Endothelial cell of umbilical vein (primary cell): ENCODE measurements at regions of chr15 and their contacts with region 1.

Region 1: GRCh38 chr15:85618956-85619491 is 175.7 kb downstream of the KLHL25 start:
- DNase-seq: peak; percentile 96
- H3K4me3 ChIP-seq: peak overlapping the region; percentile 26 to 80 (median 45)
- H3K27ac ChIP-seq: peak overlapping the region; percentile 78
- H3K4me1 ChIP-seq: peaks cover 47% of the 10 kb centered on the region
- H3K27me3 ChIP-seq: no peaks in the 10 kb centered on the region
- CTCF ChIP-seq: no peak
- POLR2A ChIP-seq: no peak

Region 2: GRCh38 chr15:85296615-85297402 is 322.2 kb before region 1 on chr15:
- CTCF ChIA-PET with region 1: no interaction called
- POLR2A ChIA-PET with region 1: no interaction called
- dilution Hi-C with region 1: no loop called
- intact Hi-C with region 1: no loop called
- DNase-seq: peak; percentile 85
- H3K4me3 ChIP-seq: no peak overlapping the region
- H3K27ac ChIP-seq: no peak overlapping the region
- H3K4me1 ChIP-seq: peaks cover 7% of the 10 kb centered on the region
- H3K27me3 ChIP-seq: peaks cover 0 to 2% of the 10 kb centered on the region in 2 experiments
- CTCF ChIP-seq: peak; percentile 62 to 71
- POLR2A ChIP-seq: no peak

Region 3: GRCh38 chr15:85592148-85592547 is 26.9 kb before region 1 on chr15:
- CTCF ChIA-PET with region 1: interaction called, 5 read pairs
- POLR2A ChIA-PET with region 1: no interaction called
- dilution Hi-C with region 1: no loop called
- intact Hi-C with region 1: loop called (anchors 2 kb)
- DNase-seq: peak; percentile 93
- H3K4me3 ChIP-seq: no peak overlapping the region
- H3K27ac ChIP-seq: peak overlapping the region; percentile 60
- H3K4me1 ChIP-seq: peaks cover 11% of the 10 kb centered on the region
- H3K27me3 ChIP-seq: no peaks in the 10 kb centered on the region
- CTCF ChIP-seq: peak in 1 of 2 donors; percentile 23
- POLR2A ChIP-seq: no peak

Region 4: DNA sequence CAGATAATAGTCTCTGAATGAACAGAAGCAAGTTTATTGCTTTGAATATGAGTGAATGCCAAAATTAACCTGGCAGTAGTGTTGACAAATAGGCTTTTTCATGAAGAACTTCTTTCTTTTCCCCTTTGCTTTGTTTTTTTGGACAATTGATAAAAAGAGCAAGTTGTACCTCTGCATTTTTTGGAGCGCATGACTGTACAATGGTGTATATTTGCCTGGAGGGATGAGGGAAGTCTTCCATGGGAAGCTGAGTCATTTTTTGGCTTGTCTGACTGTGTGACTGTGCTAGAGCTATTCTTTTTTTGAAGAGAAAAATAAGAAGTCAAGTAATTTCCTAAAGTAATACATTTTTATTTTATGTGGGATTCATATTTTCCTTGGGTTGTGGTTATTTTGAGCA is 11.2 kb before region 1 on chr15:
- CTCF ChIA-PET with region 1: interaction called, 15 read pairs
- POLR2A ChIA-PET with region 1: interaction called, 3 read pairs
- dilution Hi-C with region 1: no loop called
- intact Hi-C with region 1: loop called (anchors 1 kb)
- DNase-seq: peak; percentile 92
- H3K4me3 ChIP-seq: peak overlapping the region in 2 of 3 experiments; percentile 28 to 55
- H3K27ac ChIP-seq: peak overlapping the region; percentile 98
- H3K4me1 ChIP-seq: peaks cover 28% of the 10 kb centered on the region
- H3K27me3 ChIP-seq: no peaks in the 10 kb centered on the region
- CTCF ChIP-seq: no peak
- POLR2A ChIP-seq: no peak

Region 5: DNA sequence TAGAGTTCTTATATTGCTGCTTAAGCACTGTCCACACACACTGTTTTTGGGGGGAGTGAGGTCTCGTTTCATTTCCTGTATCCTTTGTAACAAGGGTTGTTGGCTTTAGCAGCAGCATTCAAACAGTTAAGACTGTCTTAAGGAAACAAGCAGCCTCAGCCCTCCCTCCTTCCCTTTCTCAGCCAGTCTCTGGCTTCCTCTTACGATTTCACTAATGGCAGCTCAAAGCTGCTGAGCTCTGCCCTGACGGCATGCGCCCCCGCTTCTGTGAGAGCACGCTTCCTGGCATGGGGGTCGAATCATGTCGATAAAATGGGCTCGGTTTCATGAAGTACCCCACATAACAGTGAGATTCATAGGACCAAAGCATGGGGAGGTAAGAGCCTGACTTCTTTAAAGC is 70.7 kb after region 1 on chr15:
- CTCF ChIA-PET with region 1: no interaction called
- POLR2A ChIA-PET with region 1: no interaction called
- dilution Hi-C with region 1: no loop called
- intact Hi-C with region 1: loop called (anchors 5 kb)
- DNase-seq: peak; percentile 85
- H3K4me3 ChIP-seq: peak overlapping the region in 2 of 3 experiments; percentile 17 to 53
- H3K27ac ChIP-seq: peak overlapping the region; percentile 82
- H3K4me1 ChIP-seq: peaks cover 32% of the 10 kb centered on the region
- H3K27me3 ChIP-seq: no peaks in the 10 kb centered on the region
- CTCF ChIP-seq: no peak
- POLR2A ChIP-seq: no peak

Region 6: GRCh38 chr15:85707519-85708338 is 88.7 kb after region 1 on chr15:
- CTCF ChIA-PET with region 1: interaction called, 8 read pairs
- POLR2A ChIA-PET with region 1: no interaction called
- dilution Hi-C with region 1: no loop called
- intact Hi-C with region 1: loop called (anchors 1 kb)
- DNase-seq: peak; percentile 88
- H3K4me3 ChIP-seq: peak overlapping the region in 2 of 3 experiments; percentile 5 to 51
- H3K27ac ChIP-seq: peak overlapping the region; percentile 92
- H3K4me1 ChIP-seq: peaks cover 18% of the 10 kb centered on the region
- H3K27me3 ChIP-seq: no peaks in the 10 kb centered on the region
- CTCF ChIP-seq: no peak
- POLR2A ChIP-seq: no peak

Region 7: DNA sequence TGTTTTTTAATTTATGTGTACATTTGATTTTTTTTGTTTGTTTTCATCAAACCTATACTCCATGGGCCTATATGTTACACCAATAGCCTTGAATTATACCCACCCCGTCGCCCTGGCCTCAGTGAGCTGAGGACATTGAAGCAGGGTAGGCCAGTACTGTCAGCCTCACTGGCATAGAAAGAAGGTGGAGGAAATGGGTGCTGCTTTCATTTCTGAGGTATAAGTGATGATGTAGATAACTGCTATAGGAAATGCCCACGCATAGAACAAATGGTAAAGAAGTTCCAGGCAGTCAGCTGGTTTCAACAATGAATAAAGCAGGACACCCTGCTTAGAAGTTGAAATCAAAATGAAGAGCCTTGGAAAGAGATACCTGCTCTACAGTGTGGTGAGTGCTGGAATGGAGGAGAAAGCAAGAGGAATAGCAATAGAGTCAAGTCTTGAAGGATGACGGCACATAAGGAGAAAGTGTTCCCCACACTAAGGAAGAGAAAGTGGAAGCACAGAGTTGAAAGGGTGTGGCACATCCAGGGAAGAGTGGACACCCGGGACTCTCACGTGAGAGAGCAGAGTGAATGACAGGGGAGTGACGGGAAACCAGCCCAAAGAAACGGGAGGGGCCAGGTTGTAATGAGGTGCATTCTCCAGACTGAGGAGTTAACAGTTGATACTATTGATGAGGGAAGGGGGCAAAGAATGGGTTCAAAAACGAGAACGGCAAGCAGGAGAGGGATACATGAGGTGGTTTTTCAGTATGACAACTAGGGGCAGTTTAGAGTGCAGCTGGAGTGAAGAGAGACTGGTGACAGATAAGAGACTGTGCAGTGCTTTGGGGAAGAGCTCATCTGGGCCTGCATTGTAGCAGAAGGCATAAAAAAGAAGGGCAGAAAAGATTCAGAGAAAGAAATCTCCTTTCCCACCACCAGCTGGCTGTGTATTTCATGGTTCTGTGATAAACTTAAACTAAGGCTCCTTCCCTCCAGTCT is 105.2 kb after region 1 on chr15:
- CTCF ChIA-PET with region 1: no interaction called
- POLR2A ChIA-PET with region 1: no interaction called
- dilution Hi-C with region 1: no loop called
- intact Hi-C with region 1: loop called (anchors 5 kb)
- DNase-seq: no peak
- H3K4me3 ChIP-seq: no peak overlapping the region
- H3K27ac ChIP-seq: no peak overlapping the region
- H3K4me1 ChIP-seq: no peaks in the 10 kb centered on the region
- H3K27me3 ChIP-seq: no peaks in the 10 kb centered on the region
- CTCF ChIP-seq: no peak
- POLR2A ChIP-seq: no peak

Region 8: GRCh38 chr15:85742186-85742821 is 123.3 kb after region 1 on chr15:
- CTCF ChIA-PET with region 1: no interaction called
- POLR2A ChIA-PET with region 1: no interaction called
- dilution Hi-C with region 1: no loop called
- intact Hi-C with region 1: no loop called
- DNase-seq: no peak
- H3K4me3 ChIP-seq: no peak overlapping the region
- H3K27ac ChIP-seq: no peak overlapping the region
- H3K4me1 ChIP-seq: no peaks in the 10 kb centered on the region
- H3K27me3 ChIP-seq: no peaks in the 10 kb centered on the region
- CTCF ChIP-seq: no peak
- POLR2A ChIP-seq: no peak

Region 9: GRCh38 chr15:85840065-85840801 is 221.2 kb after region 1 on chr15:
- CTCF ChIA-PET with region 1: no interaction called
- POLR2A ChIA-PET with region 1: no interaction called
- dilution Hi-C with region 1: no loop called
- intact Hi-C with region 1: loop called (anchors 5 kb)
- DNase-seq: peak; percentile 75
- H3K4me3 ChIP-seq: peak overlapping the region in 2 of 3 experiments; percentile 3 to 9
- H3K27ac ChIP-seq: no peak overlapping the region
- H3K4me1 ChIP-seq: peaks cover 2% of the 10 kb centered on the region
- H3K27me3 ChIP-seq: peaks cover 0 to 4% of the 10 kb centered on the region in 2 experiments
- CTCF ChIP-seq: peak; percentile 94 to 98
- POLR2A ChIP-seq: no peak

Region 10: DNA sequence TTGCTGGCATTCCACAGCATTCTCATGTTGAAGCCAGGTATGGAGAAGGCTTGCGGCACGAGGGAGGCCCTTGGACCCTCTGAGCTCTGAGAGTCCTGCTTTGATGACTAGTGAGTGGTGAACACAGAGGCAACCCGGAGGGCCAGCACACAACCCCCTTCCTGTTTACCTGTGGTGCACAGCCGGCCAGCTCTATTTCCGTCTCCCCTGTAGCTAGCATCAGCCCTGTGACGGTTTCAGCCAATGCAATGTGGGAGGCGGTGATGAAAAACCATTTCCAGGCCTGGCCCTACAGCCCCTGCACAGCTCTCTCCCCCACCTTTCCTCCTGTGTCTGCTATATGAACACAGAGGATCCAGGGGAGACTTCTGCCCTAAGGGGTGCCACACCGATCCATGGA is 252.5 kb after region 1 on chr15:
- CTCF ChIA-PET with region 1: no interaction called
- POLR2A ChIA-PET with region 1: no interaction called
- dilution Hi-C with region 1: no loop called
- intact Hi-C with region 1: no loop called
- DNase-seq: no peak
- H3K4me3 ChIP-seq: no peak overlapping the region
- H3K27ac ChIP-seq: no peak overlapping the region
- H3K4me1 ChIP-seq: no peaks in the 10 kb centered on the region
- H3K27me3 ChIP-seq: peaks cover 0 to 1% of the 10 kb centered on the region in 2 experiments
- CTCF ChIP-seq: no peak
- POLR2A ChIP-seq: no peak

Region 11: GRCh38 chr15:86082619-86083380 is 463.8 kb after region 1 on chr15:
- CTCF ChIA-PET with region 1: no interaction called
- POLR2A ChIA-PET with region 1: no interaction called
- dilution Hi-C with region 1: no loop called
- intact Hi-C with region 1: no loop called
- DNase-seq: no peak
- H3K4me3 ChIP-seq: no peak overlapping the region
- H3K27ac ChIP-seq: no peak overlapping the region
- H3K4me1 ChIP-seq: no peaks in the 10 kb centered on the region
- H3K27me3 ChIP-seq: no peaks in the 10 kb centered on the region
- CTCF ChIP-seq: no peak
- POLR2A ChIP-seq: no peak